A673 (cell line): ENCODE measurements at regions of chr6 and their contacts with region 1.

Region 1: GRCh38 chr6:15109338-15110090 is 136.4 kb upstream of the JARID2 start:
- DNase-seq: peak; percentile 85
- H3K4me3 ChIP-seq: no peak overlapping the region
- H3K27ac ChIP-seq: peak overlapping the region; percentile 100
- H3K4me1 ChIP-seq: peaks cover 52% of the 10 kb centered on the region
- H3K27me3 ChIP-seq: no peaks in the 10 kb centered on the region
- CTCF ChIP-seq: no peak

Region 2: DNA sequence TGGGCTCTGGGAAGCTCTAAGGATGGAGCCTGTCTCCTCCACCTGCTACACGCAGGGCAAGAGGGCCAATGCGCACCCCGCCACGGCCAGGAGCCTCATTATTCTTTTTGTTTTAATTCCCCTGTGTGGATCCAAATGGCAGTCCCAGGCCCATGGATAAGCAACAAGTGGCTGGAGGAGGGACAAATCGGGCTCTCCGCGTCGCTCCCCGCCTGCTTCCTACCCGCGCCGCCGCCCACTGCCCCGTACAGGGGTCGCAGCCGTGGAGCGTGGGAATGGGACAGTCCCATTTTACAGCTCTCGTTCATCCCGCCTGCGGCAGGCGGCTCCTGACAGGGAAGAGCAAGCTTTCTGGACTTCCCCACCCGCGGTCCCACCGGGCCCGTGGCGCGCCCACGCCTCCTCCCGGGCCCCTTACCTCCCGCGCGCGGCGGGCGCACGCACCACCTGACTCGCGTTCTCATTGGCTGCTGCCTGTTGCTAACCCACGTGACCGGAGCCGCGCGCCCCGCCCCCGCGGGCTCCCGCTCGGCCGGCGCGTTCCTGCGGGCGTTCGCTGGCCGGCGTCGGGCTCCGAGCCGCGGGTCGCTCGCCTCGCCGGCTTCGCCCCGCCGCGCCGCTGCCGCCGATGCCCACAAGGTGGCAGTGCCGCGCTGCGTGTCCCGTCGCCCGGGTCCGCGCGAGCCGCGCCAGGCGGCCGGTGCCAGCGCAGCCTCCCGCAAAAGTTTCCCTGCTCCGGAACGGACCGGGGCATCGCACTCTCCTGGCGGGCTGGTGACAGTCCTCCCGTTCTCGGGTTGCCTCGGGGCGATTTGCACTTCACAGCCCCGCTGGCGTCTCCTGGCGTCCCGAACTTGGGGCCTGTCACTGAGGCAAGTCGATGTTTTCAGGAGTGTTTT is 898.6 kb before region 1 on chr6:
- CTCF ChIA-PET with region 1: no interaction called
- POLR2A ChIA-PET with region 1: no interaction called
- intact Hi-C with region 1: loop called (anchors 2 kb)
- DNase-seq: peak; percentile 96
- H3K4me3 ChIP-seq: peak overlapping the region; percentile 54
- H3K27ac ChIP-seq: peak overlapping the region; percentile 91
- H3K4me1 ChIP-seq: peaks cover 38% of the 10 kb centered on the region
- H3K27me3 ChIP-seq: no peaks in the 10 kb centered on the region
- CTCF ChIP-seq: peak; percentile 47; the same call in 1 of the 2 replicates

Region 3: GRCh38 chr6:14499841-14500240 is 609.7 kb before region 1 on chr6:
- CTCF ChIA-PET with region 1: no interaction called
- POLR2A ChIA-PET with region 1: no interaction called
- intact Hi-C with region 1: loop called (anchors 2 kb)
- DNase-seq: peak; percentile 90
- H3K4me3 ChIP-seq: no peak overlapping the region
- H3K27ac ChIP-seq: peak overlapping the region; percentile 15
- H3K4me1 ChIP-seq: peaks cover 27% of the 10 kb centered on the region
- H3K27me3 ChIP-seq: no peaks in the 10 kb centered on the region
- CTCF ChIP-seq: 0 out of 2 replicates have a peak, but pooled peaks have one; percentile 18

Region 4: DNA sequence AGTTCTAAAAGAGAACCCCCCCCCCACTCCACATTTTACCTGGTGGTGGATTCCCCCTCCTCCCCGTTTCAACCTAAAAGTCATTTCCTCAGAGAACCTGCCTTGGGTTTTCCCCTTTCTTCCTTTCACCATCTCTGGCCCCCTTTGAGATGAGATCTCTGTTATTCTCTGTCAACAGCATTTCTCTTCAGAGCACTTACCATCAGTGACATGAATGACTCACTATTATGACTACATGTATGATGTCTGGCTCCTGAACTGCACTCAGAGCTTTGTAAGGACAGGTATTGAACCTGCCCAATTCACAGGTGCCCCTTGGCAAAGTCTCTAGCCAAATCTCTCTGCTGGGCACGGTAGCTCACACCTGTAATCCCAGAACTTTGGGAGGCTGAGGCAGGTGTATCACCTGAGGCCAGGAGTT is 74.9 kb after region 1 on chr6:
- CTCF ChIA-PET with region 1: interaction called, 4 read pairs
- POLR2A ChIA-PET with region 1: no interaction called
- intact Hi-C with region 1: loop called (anchors 1 kb)
- DNase-seq: peak; percentile 15
- H3K4me3 ChIP-seq: no peak overlapping the region
- H3K27ac ChIP-seq: peak overlapping the region; percentile 65
- H3K4me1 ChIP-seq: peaks cover 7% of the 10 kb centered on the region
- H3K27me3 ChIP-seq: no peaks in the 10 kb centered on the region
- CTCF ChIP-seq: no peak

Region 5: DNA sequence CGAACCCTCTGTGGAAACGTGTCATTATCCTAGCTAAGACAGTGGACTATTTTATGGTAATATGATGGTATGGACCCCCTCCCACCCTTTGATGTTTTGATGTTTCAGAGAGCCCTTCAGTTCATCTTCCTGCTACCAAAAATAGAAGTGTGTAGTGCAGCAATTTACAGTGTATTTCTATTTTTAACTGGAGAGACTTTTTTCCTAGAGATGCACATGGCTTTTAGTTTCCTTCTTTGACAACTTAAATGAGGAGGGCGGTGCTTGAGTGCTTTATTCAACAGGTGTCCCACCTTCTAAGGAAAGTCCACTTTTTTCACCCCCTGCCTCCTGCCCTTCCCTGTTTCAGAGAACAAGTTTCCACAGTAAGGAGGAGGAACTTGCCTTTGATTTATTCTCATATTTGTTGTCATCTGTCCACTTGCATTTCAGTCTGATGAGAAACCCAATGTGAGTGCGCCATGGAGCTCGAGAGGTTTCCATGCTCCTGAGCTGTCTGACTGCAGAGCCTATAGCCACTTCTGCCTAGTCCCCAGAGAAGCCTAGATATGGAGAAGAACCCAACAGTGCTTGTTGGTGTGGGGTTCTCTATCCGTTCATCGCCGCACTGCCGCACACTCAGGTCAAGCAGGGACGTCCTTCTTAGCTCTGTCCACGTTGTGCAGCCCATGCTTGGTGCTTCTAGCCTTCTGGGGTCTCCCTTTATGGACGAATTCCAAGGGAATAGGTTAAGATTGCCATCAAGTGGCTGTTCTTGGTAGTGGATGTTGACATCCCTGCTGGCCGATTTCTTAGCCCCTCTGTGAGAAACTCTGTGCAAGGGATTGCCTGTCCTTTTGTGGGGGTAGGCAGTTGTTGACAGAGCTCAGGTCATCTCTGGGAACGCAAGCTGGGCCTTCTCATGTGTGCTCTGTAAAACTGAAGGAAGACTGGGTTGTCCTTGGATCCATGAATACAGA is 280.5 kb after region 1 on chr6:
- CTCF ChIA-PET with region 1: interaction called, 4 read pairs
- POLR2A ChIA-PET with region 1: no interaction called
- intact Hi-C with region 1: loop called (anchors 2 kb)
- DNase-seq: peak; percentile 82
- H3K4me3 ChIP-seq: no peak overlapping the region
- H3K27ac ChIP-seq: peak overlapping the region; percentile 3
- H3K4me1 ChIP-seq: peaks cover 63% of the 10 kb centered on the region
- H3K27me3 ChIP-seq: no peaks in the 10 kb centered on the region
- CTCF ChIP-seq: peak; percentile 78

Region 6: DNA sequence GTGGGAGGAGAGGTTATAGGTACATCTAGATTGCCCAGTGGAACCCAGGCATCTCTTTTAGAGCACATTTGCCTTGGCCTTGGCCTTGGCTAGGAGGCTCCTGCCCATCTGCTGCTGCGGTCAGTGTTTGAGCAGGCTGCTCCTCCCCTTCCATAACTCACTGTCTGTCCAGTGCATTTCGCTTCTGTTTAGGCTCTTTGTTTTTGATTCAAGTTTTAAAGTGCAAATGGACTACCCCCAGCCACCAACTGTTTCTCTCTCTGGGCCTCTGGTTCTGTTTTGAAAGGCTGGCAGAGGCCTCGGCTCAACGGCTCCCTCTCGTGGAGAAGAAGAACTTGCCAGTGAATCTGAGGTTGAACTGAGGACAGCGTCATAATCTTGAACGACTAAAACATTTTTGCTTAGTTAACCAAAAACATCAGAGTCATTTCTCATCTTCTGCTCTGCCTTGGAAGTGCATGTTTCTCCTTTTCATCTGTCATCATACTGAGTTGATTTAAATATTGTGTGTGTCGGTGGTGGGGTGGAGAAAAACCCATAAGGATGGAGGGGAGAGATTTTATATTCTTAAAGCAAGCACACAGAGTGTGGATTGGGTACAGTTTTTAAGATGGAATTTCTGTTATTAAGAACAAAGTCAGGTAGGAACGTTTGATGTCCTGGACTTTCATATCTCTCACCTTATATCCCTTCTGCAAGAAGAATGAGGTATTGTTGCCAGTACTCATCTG is 381.9 kb after region 1 on chr6:
- CTCF ChIA-PET with region 1: no interaction called
- POLR2A ChIA-PET with region 1: no interaction called
- intact Hi-C with region 1: loop called (anchors 10 kb)
- DNase-seq: peak; percentile 82
- H3K4me3 ChIP-seq: no peak overlapping the region
- H3K27ac ChIP-seq: no peak overlapping the region
- H3K4me1 ChIP-seq: peaks cover 39% of the 10 kb centered on the region
- H3K27me3 ChIP-seq: no peaks in the 10 kb centered on the region
- CTCF ChIP-seq: peak; percentile 96